ENCODE measurements at regions of chr10 and their contacts with region 1.

Region 1: DNA sequence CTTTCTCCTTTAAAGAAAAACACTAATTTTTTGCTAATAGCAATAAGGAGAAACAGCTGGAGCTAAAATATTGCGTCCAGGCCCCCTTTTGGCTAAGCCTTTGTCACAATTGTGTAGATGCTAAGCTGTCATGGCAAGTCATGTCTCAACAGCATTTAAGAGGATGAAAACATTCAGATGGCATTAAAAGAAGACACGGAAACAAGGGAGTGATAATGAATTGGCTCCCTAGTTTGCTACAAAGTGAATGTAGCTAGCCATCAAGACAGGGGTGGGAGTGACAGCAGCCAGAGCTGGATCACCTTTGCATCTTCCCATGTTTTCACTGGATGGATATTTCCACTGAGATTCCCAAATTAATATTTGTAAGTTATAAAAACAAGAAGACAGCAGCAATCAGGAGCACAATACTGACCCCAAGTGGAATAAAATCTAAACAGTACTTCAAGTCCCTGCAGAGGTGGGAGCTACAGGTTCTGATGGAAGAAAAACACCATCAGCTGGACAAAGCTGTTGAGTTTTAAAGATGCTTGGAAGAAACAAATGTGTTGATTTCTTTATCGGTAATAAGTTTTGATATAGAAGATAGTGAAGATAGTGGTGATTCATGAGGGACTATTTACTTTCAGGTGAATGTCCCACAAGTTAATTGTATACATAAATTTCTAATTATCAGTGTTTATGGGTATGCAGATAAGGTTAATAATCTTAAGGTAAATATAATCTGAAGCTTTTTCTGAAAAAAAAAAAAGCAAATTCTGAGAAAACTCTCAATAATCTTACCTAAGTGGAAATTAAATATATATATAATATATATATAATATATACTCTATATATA is 129.4 kb downstream of the SLC16A9 start:
- DNase-seq: no peak
- H3K4me3 ChIP-seq: no peak overlapping the region
- CTCF ChIP-seq: peak; percentile 9

Region 2: GRCh38 chr10:59234816-59235429 is 345.3 kb before region 1 on chr10:
- CTCF ChIA-PET with region 1: interaction called, 28 read pairs
- POLR2A ChIA-PET with region 1: no interaction called
- DNase-seq: no peak
- H3K4me3 ChIP-seq: no peak overlapping the region
- CTCF ChIP-seq: peak; percentile 58

Region 3: DNA sequence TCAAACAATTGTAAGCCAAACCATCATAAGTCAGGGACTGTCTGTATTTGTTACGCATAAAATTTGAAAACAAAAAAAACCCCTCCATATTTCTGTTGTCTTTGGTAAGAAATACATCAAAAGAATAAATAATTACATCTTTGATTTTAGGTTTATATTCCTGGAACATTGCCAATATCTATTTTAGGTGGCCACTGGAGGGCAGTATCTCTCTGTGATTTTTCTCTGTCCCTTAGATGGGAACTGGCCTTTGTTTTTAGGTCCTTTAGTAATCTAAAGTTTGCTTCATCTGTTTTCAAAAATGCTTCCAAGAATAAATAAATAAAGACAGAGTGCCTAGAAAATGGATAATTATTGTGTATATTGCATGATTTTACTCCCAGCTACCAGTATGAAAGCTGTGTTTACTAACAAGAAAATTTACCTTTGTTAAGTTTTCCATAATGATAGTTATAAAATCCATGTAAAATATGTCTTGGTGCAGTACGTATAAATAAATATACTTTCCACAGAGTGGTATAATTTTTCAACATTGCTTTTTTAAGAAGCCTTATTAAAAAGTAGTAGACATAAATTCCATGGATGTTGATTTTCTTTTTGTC is 339.6 kb before region 1 on chr10:
- CTCF ChIA-PET with region 1: interaction called, 28 read pairs
- POLR2A ChIA-PET with region 1: no interaction called
- DNase-seq: no peak
- H3K4me3 ChIP-seq: no peak overlapping the region
- CTCF ChIP-seq: peak; percentile 31

Region 4: GRCh38 chr10:59479426-59479825 is 100.8 kb before region 1 on chr10:
- CTCF ChIA-PET with region 1: no interaction called
- POLR2A ChIA-PET with region 1: no interaction called
- DNase-seq: no peak
- H3K4me3 ChIP-seq: no peak overlapping the region
- CTCF ChIP-seq: no peak

Measured in AG04449 (cell line).